WTC11 (cell line): ENCODE measurements at regions of chr1 and their contacts with region 1.

Region 1: DNA sequence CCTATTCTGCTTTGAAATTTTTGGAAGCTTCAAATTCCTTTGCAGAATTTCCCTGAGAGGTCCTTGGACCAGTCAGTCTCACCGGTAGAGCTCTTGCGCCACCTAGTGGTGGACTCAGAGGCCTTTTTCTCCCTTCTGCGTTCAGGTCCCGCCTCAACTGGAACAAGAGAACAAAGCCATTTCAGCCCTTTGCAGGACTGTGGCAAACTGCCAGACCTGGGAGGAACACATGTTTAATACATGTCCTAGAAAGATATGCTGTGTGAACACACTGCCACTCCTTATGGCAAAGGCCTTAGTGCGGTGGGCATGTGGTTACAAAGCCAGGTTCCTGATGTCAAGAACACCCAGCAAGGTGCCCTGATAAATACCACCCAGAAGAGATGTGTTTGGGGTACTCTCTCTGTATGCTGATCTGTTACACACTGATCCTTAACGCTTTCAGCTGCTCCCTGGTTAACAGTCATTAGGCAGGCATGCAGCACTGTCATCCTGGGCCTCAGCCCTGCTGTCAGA is 82.2 kb upstream of the SSX2IP start:
- DNase-seq: peak; percentile 84
- ATAC-seq: peak; percentile 73
- H3K4me3 Mint-ChIP-seq: no peak overlapping the region
- H3K27ac Mint-ChIP-seq: no peak overlapping the region; the same call in 1 of the 2 replicates
- H3K4me1 Mint-ChIP-seq: peaks cover 17% of the 10 kb centered on the region; the same call in 1 of the 2 replicates
- H3K27me3 Mint-ChIP-seq: no peaks in the 10 kb centered on the region
- CTCF ChIP-seq: peak; percentile 92

Region 2: DNA sequence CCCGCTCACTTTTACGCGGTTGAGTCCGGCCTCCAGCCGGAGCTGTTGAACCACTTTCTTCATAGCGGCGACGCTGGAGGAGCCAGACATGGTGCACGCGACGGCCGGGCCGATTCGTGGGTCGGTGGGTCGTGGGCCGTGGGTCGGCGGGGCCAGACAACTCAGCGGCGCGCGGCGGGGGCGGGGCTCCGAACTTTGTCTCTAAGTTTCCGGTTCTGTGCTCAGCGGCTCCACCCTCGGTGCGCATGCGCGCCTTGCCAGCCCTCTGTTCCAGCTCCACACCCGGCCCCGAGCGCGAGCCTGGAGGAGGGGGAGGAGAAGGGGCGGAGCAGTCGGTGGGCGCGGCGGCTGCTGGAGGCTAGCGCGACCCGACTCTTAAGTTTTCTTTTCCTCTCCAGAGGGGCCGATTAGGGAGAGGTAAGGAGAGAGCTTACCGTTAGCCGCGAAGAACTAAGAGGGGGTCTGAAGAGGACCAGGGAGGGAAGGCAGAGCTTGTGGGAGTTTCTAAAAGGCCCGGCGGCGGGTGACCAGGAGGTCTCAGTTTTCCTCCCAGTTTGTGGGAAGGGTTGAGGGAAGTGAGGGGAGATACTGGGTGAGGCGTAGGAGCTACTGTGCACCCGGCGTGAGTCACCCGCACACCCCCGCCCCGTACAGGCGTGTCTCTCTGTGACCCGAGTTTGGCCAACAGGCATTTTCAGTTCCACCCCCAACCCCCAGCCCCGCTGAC is 266.3 kb before region 1 on chr1 and contains the starts of genes GNG5 and SPATA1:
- CTCF ChIA-PET with region 1: interaction called, 12 read pairs
- POLR2A ChIA-PET with region 1: no interaction called
- DNase-seq: peak; percentile 98
- ATAC-seq: peak; percentile 93
- H3K4me3 Mint-ChIP-seq: peak within 1 kb of the TSS; percentile 100
- H3K27ac Mint-ChIP-seq: peak within 1 kb of the TSS; percentile 99
- H3K4me1 Mint-ChIP-seq: peaks cover 36% of the 10 kb centered on the region
- H3K27me3 Mint-ChIP-seq: no peaks in the 10 kb centered on the region; the same call in 1 of the 2 replicates
- CTCF ChIP-seq: no peak
- total RNA-seq, gene GNG5: 108 to 122 TPM (median 111 TPM) in 3 replicates
- total RNA-seq, gene SPATA1: 0.85 to 0.92 TPM in 2 of 3 replicates, not detected in the other

Region 3: GRCh38 chr1:84753516-84754385 is 18.7 kb before region 1 on chr1:
- CTCF ChIA-PET with region 1: interaction called, 44 read pairs
- POLR2A ChIA-PET with region 1: no interaction called
- DNase-seq: peak; percentile 78
- ATAC-seq: peak; percentile 89
- H3K4me3 Mint-ChIP-seq: no peak overlapping the region
- H3K27ac Mint-ChIP-seq: no peak overlapping the region
- H3K4me1 Mint-ChIP-seq: peaks cover 59% of the 10 kb centered on the region
- H3K27me3 Mint-ChIP-seq: no peaks in the 10 kb centered on the region
- CTCF ChIP-seq: peak; percentile 84

Region 4: GRCh38 chr1:84758968-84759491 is 13.5 kb before region 1 on chr1:
- CTCF ChIA-PET with region 1: interaction called, 44 read pairs
- POLR2A ChIA-PET with region 1: no interaction called
- DNase-seq: no peak
- ATAC-seq: no peak
- H3K4me3 Mint-ChIP-seq: no peak overlapping the region
- H3K27ac Mint-ChIP-seq: no peak overlapping the region
- H3K4me1 Mint-ChIP-seq: peaks cover 48% of the 10 kb centered on the region
- H3K27me3 Mint-ChIP-seq: no peaks in the 10 kb centered on the region; the same call in 1 of the 2 replicates
- CTCF ChIP-seq: no peak

Region 5: DNA sequence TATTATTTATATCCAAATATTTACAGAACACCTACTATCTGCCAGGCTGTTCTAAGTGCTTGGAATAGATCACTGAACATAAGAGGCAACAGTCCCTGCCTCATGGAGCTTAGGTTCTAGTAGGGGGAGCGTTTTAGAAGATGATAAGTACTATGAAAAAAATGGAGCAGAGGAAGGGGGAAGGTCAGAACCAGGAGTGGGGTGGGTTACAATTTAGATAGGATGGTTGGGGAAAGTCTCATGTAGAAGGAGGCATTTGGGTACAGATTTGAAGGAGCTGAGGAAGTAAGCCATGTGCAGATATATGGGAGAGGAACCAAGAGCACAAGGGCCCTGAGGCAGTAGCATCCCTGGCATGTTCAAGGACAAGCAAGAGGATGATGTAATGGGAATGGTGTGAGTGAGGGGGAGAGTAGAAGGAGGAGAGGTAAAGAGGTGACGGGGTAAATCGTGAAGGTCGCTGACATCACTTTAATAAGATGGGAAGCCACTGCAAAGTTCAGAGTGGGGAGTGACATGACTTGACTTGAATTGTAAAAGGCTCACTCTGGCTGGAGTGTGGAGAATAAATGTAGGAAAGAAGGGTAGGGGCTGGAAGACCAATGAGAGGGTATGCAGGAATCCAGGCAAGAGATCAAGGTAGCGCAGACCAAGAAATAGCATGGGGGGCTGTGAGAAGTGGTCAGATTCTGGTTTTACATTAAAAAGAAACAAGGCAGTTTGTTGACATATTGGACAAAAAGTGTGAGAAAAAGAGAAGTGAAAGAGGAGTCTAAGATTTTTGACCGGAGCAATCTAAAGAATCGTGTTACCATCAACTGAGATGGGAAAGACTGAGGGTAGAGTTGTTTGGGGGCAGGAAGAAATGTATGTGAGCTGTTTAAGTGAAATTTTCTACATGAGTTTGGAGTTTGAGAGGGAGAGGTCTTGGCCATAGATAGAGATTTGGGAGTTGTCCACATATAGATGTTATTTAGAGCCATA is 27.9 kb after region 1 on chr1:
- CTCF ChIA-PET with region 1: no interaction called
- POLR2A ChIA-PET with region 1: no interaction called
- DNase-seq: no peak
- ATAC-seq: no peak
- H3K4me3 Mint-ChIP-seq: no peak overlapping the region
- H3K27ac Mint-ChIP-seq: no peak overlapping the region
- H3K4me1 Mint-ChIP-seq: no peaks in the 10 kb centered on the region
- H3K27me3 Mint-ChIP-seq: no peaks in the 10 kb centered on the region
- CTCF ChIP-seq: no peak

Region 6: GRCh38 chr1:84830136-84830535 is 57.6 kb after region 1 on chr1:
- CTCF ChIA-PET with region 1: no interaction called
- POLR2A ChIA-PET with region 1: no interaction called
- DNase-seq: no peak
- ATAC-seq: no peak
- H3K4me3 Mint-ChIP-seq: no peak overlapping the region
- H3K27ac Mint-ChIP-seq: no peak overlapping the region
- H3K4me1 Mint-ChIP-seq: peaks cover 6% of the 10 kb centered on the region
- H3K27me3 Mint-ChIP-seq: no peaks in the 10 kb centered on the region; the same call in 1 of the 2 replicates
- CTCF ChIP-seq: no peak

Region 7: DNA sequence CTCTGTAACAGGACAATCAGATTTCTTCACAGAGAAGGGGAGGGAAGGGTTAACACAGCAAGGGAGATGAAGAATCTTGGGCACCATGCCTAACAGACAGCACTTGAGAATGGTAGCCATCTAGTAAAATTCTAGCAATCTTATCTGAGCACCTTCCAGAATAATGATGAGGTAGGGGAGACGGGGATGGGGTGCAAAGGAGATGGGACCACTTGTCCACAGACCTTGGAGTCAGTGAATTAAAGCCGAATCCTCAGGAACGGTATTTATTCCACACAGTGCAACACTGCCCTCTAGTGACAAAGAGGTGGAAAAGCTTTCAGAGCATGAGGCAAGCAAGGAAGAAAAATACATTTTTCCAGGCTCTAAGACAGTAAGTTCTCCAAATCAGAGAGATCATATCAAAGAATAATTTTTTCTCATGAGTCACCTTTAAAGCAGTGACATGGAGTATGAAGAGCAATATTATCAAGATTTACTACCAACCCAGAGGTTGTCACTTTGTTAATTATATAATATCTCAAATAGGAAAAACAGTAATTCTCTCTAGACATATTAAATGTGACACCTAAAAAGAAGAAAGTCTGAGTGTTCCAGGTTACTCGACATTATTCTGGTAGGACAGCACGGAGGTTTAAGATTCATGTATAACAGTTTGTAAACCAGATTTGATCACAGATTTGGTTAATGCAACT is 163.8 kb after region 1 on chr1:
- CTCF ChIA-PET with region 1: interaction called, 10 read pairs
- POLR2A ChIA-PET with region 1: no interaction called
- DNase-seq: no peak
- ATAC-seq: peak; percentile 78
- H3K4me3 Mint-ChIP-seq: no peak overlapping the region
- H3K27ac Mint-ChIP-seq: no peak overlapping the region
- H3K4me1 Mint-ChIP-seq: peaks cover 10% of the 10 kb centered on the region
- H3K27me3 Mint-ChIP-seq: no peaks in the 10 kb centered on the region; the same call in 1 of the 2 replicates
- CTCF ChIP-seq: peak; percentile 86